MCF 10A (cell line): ENCODE measurements at regions of chr18 and their contacts with region 1.

Region 1: DNA sequence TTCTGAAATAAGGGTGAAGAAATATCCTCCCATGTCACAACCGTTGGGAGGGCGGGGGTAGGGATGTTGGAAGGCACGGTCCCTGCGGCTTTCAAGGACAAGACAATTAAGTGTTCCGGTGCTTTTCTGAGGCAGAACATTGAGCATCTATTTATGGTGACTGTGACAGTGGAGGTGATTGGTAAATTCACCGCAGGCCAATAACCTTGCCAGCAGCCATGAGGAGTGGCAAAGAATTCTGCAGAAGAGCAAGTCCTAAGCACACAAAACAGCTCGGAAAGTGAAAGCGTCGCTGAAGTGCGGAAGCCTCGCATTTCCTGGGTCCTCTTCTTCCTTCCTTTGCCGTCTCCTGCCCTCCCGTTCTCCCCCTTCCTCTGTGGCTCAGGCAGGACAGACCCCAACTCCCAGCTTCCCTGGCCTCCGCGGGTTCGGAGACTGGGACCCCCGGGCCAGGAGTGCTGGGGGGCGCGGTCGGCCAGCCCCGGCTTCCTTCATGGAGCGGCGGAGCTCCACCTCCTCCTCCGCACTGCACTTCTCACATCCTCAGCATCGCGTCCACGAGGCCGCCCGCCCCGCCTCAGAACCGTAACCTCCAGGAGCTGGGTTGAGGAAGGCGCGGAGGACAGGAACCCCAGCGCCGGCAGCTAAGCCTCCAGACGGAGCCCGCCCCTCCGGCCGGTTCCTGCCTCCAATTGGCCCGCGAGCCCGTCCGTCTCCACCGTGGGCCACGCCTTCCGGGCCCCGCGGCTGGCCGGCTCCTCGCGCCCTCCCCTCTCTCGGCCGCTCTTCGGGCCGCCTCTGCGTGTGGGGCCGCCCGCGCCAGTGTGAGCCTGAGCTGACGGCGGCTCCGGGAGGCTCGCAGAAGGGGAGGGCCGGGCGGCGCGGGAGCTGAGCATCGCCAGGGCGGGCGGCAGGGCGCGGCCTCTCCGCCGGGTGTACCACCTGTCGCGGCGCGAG is at the start of gene ME2:
- DNase-seq: peak; percentile 90
- H3K4me3 Mint-ChIP-seq: peak within 1 kb of the TSS; percentile 88
- H3K27ac Mint-ChIP-seq: peak within 1 kb of the TSS; percentile 93
- H3K4me1 Mint-ChIP-seq: peaks cover 8% of the 10 kb centered on the region
- H3K27me3 Mint-ChIP-seq: no peaks in the 10 kb centered on the region
- CTCF ChIP-seq: no peak
- total RNA-seq, gene ME2: 64.8 and 67.2 TPM in 2 replicates

Region 2: GRCh38 chr18:50507120-50507590 is 371.5 kb before region 1 on chr18:
- CTCF ChIA-PET with region 1: no interaction called
- POLR2A ChIA-PET with region 1: no interaction called
- intact Hi-C with region 1: no loop called
- DNase-seq: peak; percentile 63
- H3K4me3 Mint-ChIP-seq: no peak overlapping the region
- H3K27ac Mint-ChIP-seq: no peak overlapping the region
- H3K4me1 Mint-ChIP-seq: no peaks in the 10 kb centered on the region
- H3K27me3 Mint-ChIP-seq: peaks cover 47% of the 10 kb centered on the region
- CTCF ChIP-seq: peak; percentile 89

Region 3: GRCh38 chr18:50853863-50854271 is 24.8 kb before region 1 on chr18:
- CTCF ChIA-PET with region 1: no interaction called
- POLR2A ChIA-PET with region 1: interaction called, 12 read pairs
- intact Hi-C with region 1: no loop called
- DNase-seq: peak; percentile 79
- H3K4me3 Mint-ChIP-seq: no peak overlapping the region
- H3K27ac Mint-ChIP-seq: peak overlapping the region; percentile 5
- H3K4me1 Mint-ChIP-seq: peaks cover 24% of the 10 kb centered on the region
- H3K27me3 Mint-ChIP-seq: no peaks in the 10 kb centered on the region
- CTCF ChIP-seq: no peak

Region 4: GRCh38 chr18:50895350-50896045 is 16.9 kb after region 1 on chr18:
- CTCF ChIA-PET with region 1: interaction called, 4 read pairs
- POLR2A ChIA-PET with region 1: interaction called, 12 read pairs
- intact Hi-C with region 1: no loop called
- DNase-seq: no peak
- H3K4me3 Mint-ChIP-seq: no peak overlapping the region
- H3K27ac Mint-ChIP-seq: no peak overlapping the region
- H3K4me1 Mint-ChIP-seq: no peaks in the 10 kb centered on the region
- H3K27me3 Mint-ChIP-seq: no peaks in the 10 kb centered on the region
- CTCF ChIP-seq: no peak

Region 5: GRCh38 chr18:50917021-50917420 is 38.4 kb after region 1 on chr18:
- CTCF ChIA-PET with region 1: no interaction called
- POLR2A ChIA-PET with region 1: no interaction called
- intact Hi-C with region 1: no loop called
- DNase-seq: no peak
- H3K4me3 Mint-ChIP-seq: no peak overlapping the region
- H3K27ac Mint-ChIP-seq: no peak overlapping the region
- H3K4me1 Mint-ChIP-seq: peaks cover 6% of the 10 kb centered on the region
- H3K27me3 Mint-ChIP-seq: no peaks in the 10 kb centered on the region
- CTCF ChIP-seq: no peak

Region 6: DNA sequence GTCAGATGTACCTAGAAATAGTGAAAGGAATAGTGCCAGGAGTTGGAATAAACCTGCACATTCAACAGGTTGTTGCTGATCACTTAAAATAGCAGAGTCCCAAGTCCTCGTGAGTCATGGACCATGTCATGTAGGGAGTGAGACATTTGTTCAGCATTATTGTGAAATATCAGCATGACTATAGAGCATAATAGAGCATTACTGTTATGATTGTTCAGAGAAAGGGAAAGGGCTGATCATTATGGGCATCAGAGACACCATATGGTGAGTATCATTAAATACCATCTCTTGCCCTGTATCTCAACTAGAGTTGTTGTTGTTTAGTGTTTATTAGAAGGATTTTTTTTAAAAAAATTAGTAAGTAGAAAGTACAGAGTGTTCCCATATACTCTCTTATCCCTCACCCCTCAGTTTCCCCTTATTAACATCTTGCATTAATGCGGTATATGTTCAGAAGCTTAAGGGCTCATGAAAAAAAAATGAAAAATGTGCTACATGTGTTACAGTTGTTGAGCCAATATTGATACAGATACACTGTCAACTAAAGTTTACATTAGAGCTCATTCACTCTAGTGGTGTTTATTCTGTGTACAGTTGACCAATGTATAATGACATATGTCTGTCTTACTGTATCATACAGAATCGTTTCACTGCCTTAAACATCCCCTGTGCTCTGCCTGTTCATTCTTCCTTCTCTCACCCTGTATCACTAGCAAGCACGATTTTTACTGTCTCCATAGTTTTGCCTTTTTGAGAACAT is 94.9 kb after region 1 on chr18:
- CTCF ChIA-PET with region 1: no interaction called
- POLR2A ChIA-PET with region 1: interaction called, 35 read pairs
- intact Hi-C with region 1: loop called (anchors 5 kb)
- DNase-seq: peak; percentile 84
- H3K4me3 Mint-ChIP-seq: no peak overlapping the region
- H3K27ac Mint-ChIP-seq: peak overlapping the region; percentile 46
- H3K4me1 Mint-ChIP-seq: peaks cover 39% of the 10 kb centered on the region
- H3K27me3 Mint-ChIP-seq: no peaks in the 10 kb centered on the region
- CTCF ChIP-seq: no peak

Region 7: DNA sequence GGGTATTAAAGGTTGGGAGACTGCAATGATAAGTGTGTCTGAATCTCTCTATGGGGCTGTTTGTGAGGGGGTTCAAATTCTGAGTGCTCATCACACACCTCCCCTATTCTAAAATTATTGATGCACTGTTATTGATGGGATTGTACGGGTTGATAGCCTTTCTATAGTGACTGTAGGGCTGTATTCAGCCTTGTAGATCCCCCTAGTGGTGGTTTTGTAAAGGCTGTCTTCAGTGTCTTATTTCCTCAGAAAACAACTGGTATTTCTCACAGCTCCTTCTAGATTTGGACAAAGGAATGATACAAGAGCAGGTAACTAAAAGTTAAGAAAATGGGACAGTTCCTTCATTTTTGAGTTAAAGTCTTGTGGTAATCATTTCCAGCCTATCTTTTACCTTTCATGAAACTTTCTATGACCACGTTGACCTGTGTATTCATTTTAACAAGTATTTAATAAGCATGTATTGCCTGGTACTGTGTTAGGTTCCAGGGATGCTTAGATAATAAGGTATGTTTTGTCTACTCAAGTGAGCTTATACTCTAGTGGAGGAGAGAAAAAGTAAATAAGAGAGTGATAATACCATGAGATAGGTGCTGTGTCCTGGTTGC is 172.6 kb after region 1 on chr18:
- CTCF ChIA-PET with region 1: no interaction called
- POLR2A ChIA-PET with region 1: interaction called, 6 read pairs
- intact Hi-C with region 1: loop called (anchors 5 kb)
- DNase-seq: peak; percentile 57
- H3K4me3 Mint-ChIP-seq: no peak overlapping the region
- H3K27ac Mint-ChIP-seq: no peak overlapping the region
- H3K4me1 Mint-ChIP-seq: peaks cover 4% of the 10 kb centered on the region
- H3K27me3 Mint-ChIP-seq: no peaks in the 10 kb centered on the region
- CTCF ChIP-seq: peak; percentile 72

Region 8: DNA sequence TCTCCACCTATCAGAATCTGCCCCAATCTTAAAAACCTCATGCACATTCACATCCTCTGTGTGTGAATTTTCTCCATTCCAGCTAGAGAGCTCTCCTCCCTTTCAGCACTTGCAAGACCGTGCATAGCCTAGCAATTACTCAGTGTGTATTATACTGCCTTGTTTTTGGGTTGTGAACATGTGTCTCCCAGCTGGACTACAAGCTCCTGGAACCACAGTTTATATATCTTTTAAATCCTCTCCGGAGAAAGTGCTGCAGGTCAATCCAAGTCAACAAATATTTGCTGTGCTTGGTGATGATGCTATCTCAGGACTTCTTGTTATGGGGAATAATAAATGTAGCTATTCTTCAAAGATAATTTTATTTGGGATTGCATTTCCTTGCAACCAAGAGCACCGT is 377.1 kb after region 1 on chr18:
- CTCF ChIA-PET with region 1: no interaction called
- POLR2A ChIA-PET with region 1: no interaction called
- intact Hi-C with region 1: no loop called
- DNase-seq: no peak
- H3K4me3 Mint-ChIP-seq: no peak overlapping the region
- H3K27ac Mint-ChIP-seq: no peak overlapping the region
- H3K4me1 Mint-ChIP-seq: peaks cover 6% of the 10 kb centered on the region
- H3K27me3 Mint-ChIP-seq: no peaks in the 10 kb centered on the region
- CTCF ChIP-seq: no peak

Region 9: GRCh38 chr18:51724790-51725721 is 846.4 kb after region 1 on chr18:
- CTCF ChIA-PET with region 1: no interaction called
- POLR2A ChIA-PET with region 1: no interaction called
- intact Hi-C with region 1: no loop called
- DNase-seq: peak; percentile 28
- H3K4me3 Mint-ChIP-seq: no peak overlapping the region
- H3K27ac Mint-ChIP-seq: no peak overlapping the region
- H3K4me1 Mint-ChIP-seq: no peaks in the 10 kb centered on the region
- H3K27me3 Mint-ChIP-seq: peaks cover 14% of the 10 kb centered on the region
- CTCF ChIP-seq: no peak